HCT116 (cell line): ENCODE measurements at regions of chr19 and their contacts with region 1.

Region 1: GRCh38 chr19:35882114-35882832 is 13.9 kb downstream of the APLP1 start:
- DNase-seq: peak; percentile 67
- ATAC-seq: no peak
- H3K4me3 ChIP-seq: no peak overlapping the region
- H3K27ac ChIP-seq: no peak overlapping the region
- H3K4me1 ChIP-seq: peaks cover 2 to 11% of the 10 kb centered on the region in 2 experiments; a peak in 2 of 4 replicates
- H3K27me3 ChIP-seq: no peaks in the 10 kb centered on the region
- CTCF ChIP-seq: peak; percentile 49 to 85 (median 50); a peak in 5 of 6 replicates
- POLR2A ChIP-seq: no peak
- RAD21 ChIP-seq: peak; percentile 86

Region 2: GRCh38 chr19:35596366-35596999 is 285.8 kb before region 1 on chr19:
- CTCF ChIA-PET with region 1: no interaction called
- POLR2A ChIA-PET with region 1: no interaction called
- RAD21 ChIA-PET with region 1: no interaction called
- intact Hi-C with region 1: no loop called
- DNase-seq: no peak
- ATAC-seq: peak; percentile 84
- H3K4me3 ChIP-seq: no peak overlapping the region
- H3K27ac ChIP-seq: no peak overlapping the region
- H3K4me1 ChIP-seq: peaks cover 2 to 14% of the 10 kb centered on the region in 2 experiments; a peak in 3 of 4 replicates
- H3K27me3 ChIP-seq: no peaks in the 10 kb centered on the region
- CTCF ChIP-seq: no peak
- POLR2A ChIP-seq: no peak
- RAD21 ChIP-seq: no peak

Region 3: DNA sequence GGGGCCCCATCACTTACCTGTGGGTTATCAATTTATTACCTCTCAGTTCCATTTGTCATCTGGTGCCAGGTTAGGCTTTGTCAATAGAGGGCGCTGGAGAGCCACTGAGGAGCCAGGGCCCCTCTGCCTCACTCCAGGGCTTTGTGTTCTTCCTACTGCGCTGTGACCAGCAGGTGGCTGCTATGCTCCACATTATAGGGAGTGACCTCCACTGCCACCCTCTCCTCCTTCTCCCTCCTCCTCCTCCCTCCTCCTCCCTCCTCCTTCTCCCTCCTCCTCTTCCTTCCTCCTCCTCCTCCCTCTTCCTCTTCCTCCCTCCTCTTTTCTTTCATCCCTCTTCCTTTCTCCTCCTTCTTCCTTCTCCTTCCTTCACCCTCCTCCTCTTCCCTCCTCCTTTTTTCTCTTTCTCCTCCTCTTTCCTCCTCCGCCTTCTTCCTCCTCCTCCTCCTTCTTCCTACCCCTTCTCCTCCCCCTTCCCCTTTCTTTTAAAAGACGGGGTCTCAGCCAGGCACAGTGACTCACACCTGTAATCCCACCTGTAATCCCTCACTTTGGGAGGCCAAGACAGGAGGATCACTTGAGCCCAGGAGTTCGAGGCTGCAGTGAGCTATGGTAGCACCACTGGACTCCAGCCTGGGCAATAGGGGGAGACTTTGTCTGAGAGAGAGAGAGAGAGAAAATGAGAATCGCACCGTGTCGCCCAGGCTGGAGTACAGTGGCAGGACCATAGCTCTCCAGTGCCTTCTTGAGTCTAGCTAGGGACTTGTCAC is 188.3 kb before region 1 on chr19:
- CTCF ChIA-PET with region 1: interaction called, 3 read pairs
- POLR2A ChIA-PET with region 1: no interaction called
- RAD21 ChIA-PET with region 1: no interaction called
- intact Hi-C with region 1: loop called (anchors 5 kb)
- DNase-seq: peak; percentile 85
- ATAC-seq: peak; percentile 99
- H3K4me3 ChIP-seq: no peak overlapping the region
- H3K27ac ChIP-seq: no peak overlapping the region
- H3K4me1 ChIP-seq: peaks cover 5 to 9% of the 10 kb centered on the region in 2 experiments; a peak in 2 of 4 replicates
- H3K27me3 ChIP-seq: no peaks in the 10 kb centered on the region
- CTCF ChIP-seq: peak; percentile 98 to 99 (median 99)
- POLR2A ChIP-seq: no peak
- RAD21 ChIP-seq: peak; percentile 95

Region 4: GRCh38 chr19:35733180-35734095 is 148.8 kb before region 1 on chr19:
- CTCF ChIA-PET with region 1: no interaction called
- POLR2A ChIA-PET with region 1: no interaction called
- RAD21 ChIA-PET with region 1: no interaction called
- intact Hi-C with region 1: no loop called
- DNase-seq: no peak
- ATAC-seq: no peak
- H3K4me3 ChIP-seq: no peak overlapping the region
- H3K27ac ChIP-seq: no peak overlapping the region
- H3K4me1 ChIP-seq: no peaks in the 10 kb centered on the region
- H3K27me3 ChIP-seq: no peaks in the 10 kb centered on the region
- CTCF ChIP-seq: no peak
- POLR2A ChIP-seq: no peak
- RAD21 ChIP-seq: no peak

Region 5: GRCh38 chr19:35869327-35870123 is 12.7 kb before region 1 on chr19:
- CTCF ChIA-PET with region 1: interaction called, 12 read pairs
- POLR2A ChIA-PET with region 1: interaction called, 6 read pairs
- RAD21 ChIA-PET with region 1: interaction called in 1 of 2 experiments, 3 read pairs
- intact Hi-C with region 1: no loop called
- DNase-seq: peak; percentile 89
- ATAC-seq: peak; percentile 85
- H3K4me3 ChIP-seq: peak overlapping the region; percentile 49 to 61
- H3K27ac ChIP-seq: peak overlapping the region; percentile 43
- H3K4me1 ChIP-seq: peaks cover 15 to 30% of the 10 kb centered on the region in 2 experiments; a peak in 3 of 4 replicates
- H3K27me3 ChIP-seq: no peaks in the 10 kb centered on the region
- CTCF ChIP-seq: no peak
- POLR2A ChIP-seq: peak; percentile 17
- RAD21 ChIP-seq: no peak

Region 6: GRCh38 chr19:35977446-35978222 is 95.4 kb after region 1 on chr19:
- CTCF ChIA-PET with region 1: no interaction called
- POLR2A ChIA-PET with region 1: no interaction called
- RAD21 ChIA-PET with region 1: no interaction called
- intact Hi-C with region 1: loop called (anchors 5 kb)
- DNase-seq: peak; percentile 45
- ATAC-seq: peak; percentile 97
- H3K4me3 ChIP-seq: no peak overlapping the region
- H3K27ac ChIP-seq: no peak overlapping the region
- H3K4me1 ChIP-seq: no peaks in the 10 kb centered on the region
- H3K27me3 ChIP-seq: peaks cover under 1% of the 10 kb centered on the region; the same call in 1 of the 2 replicates
- CTCF ChIP-seq: peak; percentile 66 to 70 (median 70); a peak in 5 of 6 replicates
- POLR2A ChIP-seq: no peak
- RAD21 ChIP-seq: peak; percentile 53

Region 7: GRCh38 chr19:36169084-36169760 is 286.9 kb after region 1 on chr19:
- CTCF ChIA-PET with region 1: no interaction called
- POLR2A ChIA-PET with region 1: no interaction called
- RAD21 ChIA-PET with region 1: no interaction called
- intact Hi-C with region 1: loop called (anchors 2 kb)
- DNase-seq: no peak
- ATAC-seq: no peak
- H3K4me3 ChIP-seq: no peak overlapping the region
- H3K27ac ChIP-seq: peak overlapping the region; percentile 13; the same call in 1 of the 2 replicates
- H3K4me1 ChIP-seq: peaks cover 6 to 13% of the 10 kb centered on the region in 2 experiments; a peak in 3 of 4 replicates
- H3K27me3 ChIP-seq: no peaks in the 10 kb centered on the region
- CTCF ChIP-seq: no peak
- POLR2A ChIP-seq: no peak
- RAD21 ChIP-seq: no peak